ENCODE measurements at regions of chr12 and their contacts with region 1.

Region 1: GRCh38 chr12:47828608-47829536 is 9.2 kb upstream of the HDAC7 start:
- DNase-seq: no peak
- ATAC-seq: no peak
- H3K4me3 Mint-ChIP-seq: no peak overlapping the region
- H3K27ac Mint-ChIP-seq: peak overlapping the region; percentile 71
- H3K4me1 Mint-ChIP-seq: peaks cover 90% of the 10 kb centered on the region
- H3K27me3 Mint-ChIP-seq: no peaks in the 10 kb centered on the region

Region 2: DNA sequence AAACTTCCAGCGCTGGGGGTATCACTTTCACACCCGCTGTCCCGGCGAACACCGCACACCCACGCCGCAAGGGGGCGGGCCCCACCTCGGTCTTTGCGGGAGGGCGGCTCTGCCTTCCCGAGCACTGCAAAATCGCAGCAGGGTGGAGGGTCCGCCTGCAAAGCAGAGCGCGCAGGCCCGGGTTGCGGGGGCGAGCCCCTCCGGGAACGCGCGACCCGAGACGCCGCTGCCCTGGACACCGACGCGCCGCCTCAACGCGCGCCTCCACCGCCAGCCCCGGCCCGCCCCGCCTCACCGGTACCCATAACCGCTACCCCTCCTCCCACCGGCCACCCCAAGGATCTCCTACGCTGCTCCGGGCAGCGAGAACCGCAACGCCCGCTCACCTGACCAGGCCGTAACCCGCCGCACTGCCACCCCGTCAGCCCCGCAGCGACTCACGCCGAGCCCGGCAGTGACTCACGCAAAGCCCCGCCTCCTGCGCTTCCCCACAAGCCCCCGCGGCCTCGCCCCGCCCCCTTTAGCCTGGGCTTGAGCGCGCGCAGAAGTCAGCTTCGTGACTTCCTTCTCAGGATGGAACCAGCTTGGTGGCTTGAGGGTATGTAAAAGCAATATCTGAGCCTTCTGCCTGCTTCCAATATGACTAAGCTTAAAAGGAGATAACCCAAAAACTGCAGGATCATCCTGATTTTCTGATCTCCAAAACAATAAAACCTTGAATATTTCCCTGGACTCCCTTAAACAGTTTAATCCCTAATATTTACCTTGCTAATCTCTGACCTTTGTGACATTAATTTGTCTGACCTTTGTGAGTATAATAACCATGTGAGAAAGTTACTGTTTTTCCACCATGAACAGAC is 123.1 kb before region 1 on chr12 and contains the start of gene RPAP3:
- CTCF ChIA-PET with region 1: no interaction called
- POLR2A ChIA-PET with region 1: interaction called, 10 read pairs
- DNase-seq: peak; percentile 98
- ATAC-seq: peak; percentile 96
- H3K4me3 Mint-ChIP-seq: peak within 1 kb of the TSS; percentile 92
- H3K27ac Mint-ChIP-seq: peak within 1 kb of the TSS; percentile 97
- H3K4me1 Mint-ChIP-seq: peaks cover 57% of the 10 kb centered on the region
- H3K27me3 Mint-ChIP-seq: no peaks in the 10 kb centered on the region
- total RNA-seq, gene RPAP3: 41.6 to 41.7 TPM

Region 3: GRCh38 chr12:47870175-47870781 is 41.4 kb after region 1 on chr12:
- CTCF ChIA-PET with region 1: no interaction called
- POLR2A ChIA-PET with region 1: no interaction called
- DNase-seq: no peak
- ATAC-seq: peak; percentile 38
- H3K4me3 Mint-ChIP-seq: no peak overlapping the region
- H3K27ac Mint-ChIP-seq: peak overlapping the region; percentile 41
- H3K4me1 Mint-ChIP-seq: peaks cover 48% of the 10 kb centered on the region
- H3K27me3 Mint-ChIP-seq: no peaks in the 10 kb centered on the region

Measured in activated CD8-positive, alpha-beta T cell treated with anti-CD3 and anti-CD28 coated beads, Interleukin-2, amount 10 ng/mL, durations not matched to agents 7 days and 5 days (primary cell).